Right cardiac atrium (tissue), 5 donors: ENCODE measurements at regions of chr14 and their contacts with region 1.

Region 1: DNA sequence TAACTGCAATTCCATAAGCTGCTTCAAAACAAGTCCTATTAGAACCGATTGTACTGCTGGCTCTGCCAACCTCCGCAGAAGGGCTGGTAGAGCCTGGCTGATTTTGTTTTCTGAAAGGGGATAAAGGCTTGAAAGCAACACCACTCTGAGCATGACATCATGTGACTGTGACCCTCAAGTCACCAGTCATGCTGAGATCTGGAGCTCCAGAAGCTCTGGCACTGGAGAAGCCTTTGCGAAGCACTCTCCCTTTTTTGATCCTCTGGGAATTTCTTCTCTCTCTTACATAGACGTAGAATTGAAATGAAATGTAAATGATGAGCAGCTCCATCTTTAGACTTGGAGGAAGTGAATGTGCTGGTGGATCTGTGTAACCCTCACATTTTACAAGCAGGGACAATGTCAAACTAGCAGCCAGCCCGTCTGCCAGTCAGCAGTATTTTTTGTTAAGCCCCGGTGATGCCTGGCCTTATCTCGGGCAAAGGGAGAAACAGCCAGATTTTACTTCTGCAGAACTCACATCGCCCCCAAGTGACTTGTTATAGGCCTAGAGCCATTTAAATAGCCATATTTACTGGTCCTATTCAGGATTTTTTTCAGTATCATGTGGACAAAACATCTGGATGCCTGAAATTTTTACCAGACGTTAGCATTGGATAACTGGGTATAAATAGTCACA is 112.1 kb upstream of the NPAS3 start:
- DNase-seq: peak in 2 of 3 donors; percentile 8 to 40
- ATAC-seq: peak; percentile 55 to 80
- H3K4me3 ChIP-seq: no peak overlapping the region
- H3K27ac ChIP-seq: no peak overlapping the region
- H3K4me1 ChIP-seq: peaks cover 8% of the 10 kb centered on the region
- H3K27me3 ChIP-seq: no peaks in the 10 kb centered on the region

Region 2: GRCh38 chr14:32576088-32576795 is 250.3 kb before region 1 on chr14:
- intact Hi-C with region 1: loop called in 2 of 4 experiments (anchors 5 to 10 kb)
- DNase-seq: peak in 1 of 3 donors; percentile 53
- ATAC-seq: peak; percentile 83 to 86
- H3K4me3 ChIP-seq: peak overlapping the region; percentile 26
- H3K27ac ChIP-seq: no peak overlapping the region
- H3K4me1 ChIP-seq: no peaks in the 10 kb centered on the region
- H3K27me3 ChIP-seq: no peaks in the 10 kb centered on the region

Region 3: DNA sequence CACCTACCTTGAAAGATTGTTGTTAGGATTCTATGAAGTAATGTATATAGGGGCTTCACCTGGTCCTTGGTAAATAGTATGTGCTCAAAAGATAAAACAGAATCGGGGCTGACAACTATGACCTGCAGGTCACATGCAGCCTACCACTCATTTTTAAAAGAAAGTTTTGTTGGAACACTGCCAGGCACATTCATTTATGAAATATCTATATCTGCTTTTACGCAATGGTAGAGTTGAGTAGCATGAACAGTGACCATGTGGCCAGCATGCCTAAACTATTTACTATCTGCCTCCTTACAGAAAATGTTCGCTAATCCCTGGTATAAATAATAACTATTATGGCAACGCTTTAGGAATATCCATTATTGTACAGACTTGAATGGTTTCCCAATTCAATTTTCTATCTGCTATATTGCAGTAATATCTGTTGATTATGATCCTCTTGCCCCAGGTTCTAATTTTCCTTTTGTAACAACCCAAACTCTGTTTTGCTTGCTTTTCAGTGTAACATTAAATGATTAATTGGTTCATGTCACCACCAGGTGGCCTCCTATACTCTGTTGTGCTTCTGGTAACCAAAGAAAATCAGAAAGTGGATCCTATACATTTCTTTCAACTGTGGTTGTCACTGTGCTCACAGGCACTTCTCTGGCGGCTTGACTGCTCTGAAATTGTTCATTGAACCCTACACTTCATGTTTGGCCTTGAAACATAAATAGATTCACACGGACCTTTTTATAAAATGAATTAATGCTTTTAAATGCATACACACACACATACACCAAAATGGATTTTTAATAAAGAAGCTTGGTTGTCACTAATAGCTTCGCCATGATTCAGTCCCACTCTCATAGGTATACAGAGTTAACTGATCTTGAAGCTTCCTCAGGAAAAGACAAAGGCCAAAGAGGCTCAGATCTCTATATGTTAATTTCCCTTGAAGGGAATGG is 115.5 kb before region 1 on chr14:
- intact Hi-C with region 1: loop called in 1 of 4 experiments (anchors 5 kb)
- DNase-seq: no peak
- ATAC-seq: peak in 1 of 2 donors; percentile 53
- H3K4me3 ChIP-seq: peak overlapping the region; percentile 40
- H3K27ac ChIP-seq: no peak overlapping the region
- H3K4me1 ChIP-seq: peaks cover 2% of the 10 kb centered on the region
- H3K27me3 ChIP-seq: no peaks in the 10 kb centered on the region

Region 4: GRCh38 chr14:32724867-32725471 is 101.6 kb before region 1 on chr14:
- intact Hi-C with region 1: loop called in 1 of 4 experiments (anchors 10 kb)
- DNase-seq: peak in 2 of 3 donors; percentile 12 to 50
- ATAC-seq: no peak
- H3K4me3 ChIP-seq: peak overlapping the region; percentile 25
- H3K27ac ChIP-seq: no peak overlapping the region
- H3K4me1 ChIP-seq: no peaks in the 10 kb centered on the region
- H3K27me3 ChIP-seq: no peaks in the 10 kb centered on the region